WTC11 (cell line): ENCODE measurements at regions of chr2 and their contacts with region 1.

Region 1: DNA sequence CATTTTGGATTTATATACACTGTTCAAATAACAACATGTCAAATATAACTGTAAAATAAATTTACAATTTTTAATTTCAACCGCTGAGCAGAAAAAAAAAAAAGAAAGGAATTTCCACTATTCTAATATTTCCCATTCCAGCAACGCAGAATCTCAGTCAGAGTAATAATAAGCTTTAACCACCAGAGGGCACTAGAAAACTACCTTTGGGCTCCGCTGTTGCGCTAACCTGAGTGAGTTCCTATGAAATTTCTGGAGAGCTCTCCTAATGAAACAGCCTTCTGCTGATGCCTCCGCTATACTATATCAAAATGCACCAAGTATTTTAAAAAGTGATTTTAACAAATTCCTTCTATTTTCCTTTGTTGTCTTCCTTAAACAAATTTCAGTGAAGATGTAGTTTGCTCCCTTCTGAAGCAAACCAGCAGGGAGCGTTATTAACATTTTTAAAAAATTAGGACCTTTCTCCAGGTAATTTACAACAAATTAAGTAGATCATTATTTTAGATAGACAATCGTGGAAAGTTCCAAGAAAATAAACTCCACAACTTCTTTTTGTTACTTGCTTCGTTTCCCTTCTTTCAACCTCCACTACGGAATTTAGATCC is 23.0 kb downstream of the ERMN start:
- DNase-seq: no peak
- ATAC-seq: peak; percentile 68
- H3K4me3 Mint-ChIP-seq: no peak overlapping the region
- H3K27ac Mint-ChIP-seq: no peak overlapping the region
- H3K4me1 Mint-ChIP-seq: peaks cover 26% of the 10 kb centered on the region
- H3K27me3 Mint-ChIP-seq: peaks cover 4% of the 10 kb centered on the region
- CTCF ChIP-seq: peak; percentile 71

Region 2: DNA sequence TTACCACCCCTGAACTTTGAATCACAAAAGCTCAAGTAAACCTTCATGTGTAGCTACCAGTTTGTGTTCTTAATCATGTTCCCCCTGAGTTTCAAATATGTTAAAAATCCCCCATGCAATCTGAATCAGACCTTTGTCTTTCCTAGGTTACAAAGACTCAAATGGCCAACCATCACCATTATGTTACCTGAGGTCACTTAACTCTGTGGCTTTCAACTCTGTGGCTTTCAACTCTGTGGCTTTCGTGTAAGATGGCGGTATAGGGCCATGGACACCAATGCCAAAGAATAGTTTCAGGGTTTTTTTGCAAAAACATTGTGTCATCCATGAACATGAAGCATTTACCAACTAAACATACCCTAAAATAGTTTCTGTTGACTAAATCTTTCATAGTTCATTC is 16.3 kb after region 1 on chr2:
- CTCF ChIA-PET with region 1: interaction called, 22 read pairs
- POLR2A ChIA-PET with region 1: no interaction called
- DNase-seq: no peak
- ATAC-seq: no peak
- H3K4me3 Mint-ChIP-seq: no peak overlapping the region
- H3K27ac Mint-ChIP-seq: no peak overlapping the region
- H3K4me1 Mint-ChIP-seq: peaks cover 44% of the 10 kb centered on the region
- H3K27me3 Mint-ChIP-seq: no peaks in the 10 kb centered on the region
- CTCF ChIP-seq: no peak

Region 3: GRCh38 chr2:157336137-157337010 is 33.8 kb after region 1 on chr2:
- CTCF ChIA-PET with region 1: interaction called, 60 read pairs
- POLR2A ChIA-PET with region 1: no interaction called
- DNase-seq: peak; percentile 22
- ATAC-seq: peak; percentile 72
- H3K4me3 Mint-ChIP-seq: no peak overlapping the region
- H3K27ac Mint-ChIP-seq: no peak overlapping the region
- H3K4me1 Mint-ChIP-seq: peaks cover 16% of the 10 kb centered on the region
- H3K27me3 Mint-ChIP-seq: no peaks in the 10 kb centered on the region
- CTCF ChIP-seq: peak; percentile 78

Region 4: DNA sequence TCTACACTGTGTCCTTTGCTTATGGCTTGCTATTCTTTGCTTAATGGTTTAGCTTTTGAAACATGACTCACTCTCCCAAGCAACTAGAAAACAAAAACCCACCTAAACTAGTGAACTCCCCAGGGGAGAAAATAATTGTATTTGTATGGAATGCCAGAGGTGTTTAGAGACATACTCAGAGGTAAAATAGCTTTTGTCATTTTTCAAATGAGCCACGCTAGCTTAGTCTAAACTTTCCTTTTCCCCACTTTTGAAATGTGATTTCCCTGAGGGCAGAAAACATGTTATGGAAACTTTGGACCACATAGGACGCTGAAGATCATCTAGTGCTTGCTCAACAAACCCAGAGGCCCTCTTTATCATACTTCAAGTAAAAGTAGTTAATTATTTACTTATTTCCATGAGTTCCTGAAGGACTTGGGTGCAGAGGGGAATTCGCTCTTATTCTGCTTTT is 157.8 kb after region 1 on chr2:
- CTCF ChIA-PET with region 1: interaction called, 14 read pairs
- POLR2A ChIA-PET with region 1: no interaction called
- DNase-seq: no peak
- ATAC-seq: no peak
- H3K4me3 Mint-ChIP-seq: no peak overlapping the region
- H3K27ac Mint-ChIP-seq: no peak overlapping the region
- H3K4me1 Mint-ChIP-seq: peaks cover 22% of the 10 kb centered on the region
- H3K27me3 Mint-ChIP-seq: no peaks in the 10 kb centered on the region
- CTCF ChIP-seq: no peak

Region 5: GRCh38 chr2:157492189-157492773 is 189.7 kb after region 1 on chr2:
- CTCF ChIA-PET with region 1: interaction called, 16 read pairs
- POLR2A ChIA-PET with region 1: no interaction called
- DNase-seq: peak; percentile 74
- ATAC-seq: peak; percentile 94
- H3K4me3 Mint-ChIP-seq: no peak overlapping the region
- H3K27ac Mint-ChIP-seq: no peak overlapping the region
- H3K4me1 Mint-ChIP-seq: 0 out of 2 replicates have a peak, but pooled peaks cover 4% of the 10 kb centered on the region
- H3K27me3 Mint-ChIP-seq: no peaks in the 10 kb centered on the region
- CTCF ChIP-seq: peak; percentile 62; the same call in 1 of the 2 replicates